ENCODE measurements at regions of chr5 and their contacts with region 1.

Region 1: DNA sequence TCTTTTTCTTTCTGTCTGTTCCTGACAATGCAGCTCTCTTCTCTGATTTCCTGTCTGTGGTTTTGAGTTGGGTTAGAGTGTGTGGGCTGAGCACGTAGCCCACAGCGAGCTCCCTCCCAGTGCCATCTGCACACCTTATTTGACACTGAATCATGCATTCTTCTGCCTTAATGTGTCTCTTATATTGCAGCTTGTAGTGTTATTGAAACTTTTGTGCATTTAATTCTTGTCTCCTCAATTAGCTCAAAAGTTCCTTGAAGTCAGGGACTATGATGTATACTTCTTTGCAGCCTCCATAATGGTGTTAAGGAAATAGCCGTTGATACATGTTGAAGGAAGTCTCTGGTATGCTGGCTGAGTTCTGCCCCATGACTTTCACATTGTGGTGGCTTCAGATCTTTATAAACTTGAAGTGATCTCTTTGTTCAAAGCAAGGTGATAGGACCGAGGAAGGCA is 576.2 kb upstream of the CLINT1 start:
- DNase-seq: no peak
- ATAC-seq: peak; percentile 49
- H3K4me3 Mint-ChIP-seq: peak overlapping the region; percentile 50
- H3K27ac Mint-ChIP-seq: peak overlapping the region; percentile 33
- H3K4me1 Mint-ChIP-seq: peaks cover 72% of the 10 kb centered on the region
- H3K27me3 Mint-ChIP-seq: no peaks in the 10 kb centered on the region
- CTCF ChIP-seq: no peak

Region 2: DNA sequence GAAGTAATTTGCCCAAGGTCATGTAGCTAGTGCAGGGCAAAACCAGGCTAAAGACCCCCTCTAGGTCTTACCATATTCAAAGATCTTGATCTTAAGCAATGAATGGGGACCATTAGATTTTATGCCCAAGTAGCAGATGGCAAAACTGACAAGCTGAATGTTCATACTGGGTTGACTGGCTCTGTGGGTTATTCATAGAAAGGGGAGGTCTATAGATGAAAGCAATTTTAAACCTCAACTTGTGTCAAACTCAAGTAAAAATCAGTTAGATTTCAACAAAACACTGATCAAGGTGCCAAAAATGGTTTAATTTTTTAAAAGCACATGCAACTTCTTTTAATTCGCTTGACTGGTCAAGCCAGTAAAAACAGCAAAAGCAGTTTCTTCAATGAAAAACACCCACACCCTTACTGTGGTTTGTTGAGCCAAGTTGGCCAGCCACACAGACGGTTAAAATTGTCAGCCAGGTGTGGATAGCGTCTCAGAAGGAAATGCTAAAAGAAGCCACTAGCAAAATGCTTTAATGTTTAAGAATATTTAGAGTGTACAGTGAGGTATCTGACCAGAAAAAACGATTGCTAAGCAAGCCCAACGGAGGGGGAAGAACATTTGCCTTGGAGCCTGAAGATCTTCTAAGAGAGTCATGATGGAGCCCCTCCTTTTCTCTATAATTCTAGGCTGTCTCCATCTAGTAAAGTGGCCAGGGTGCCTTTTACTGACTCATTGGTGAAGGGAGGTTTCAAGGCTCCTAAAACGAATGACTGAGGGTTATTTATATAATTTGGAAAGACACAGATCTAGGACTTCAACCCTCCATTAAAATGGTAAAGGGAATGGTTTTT is 36.6 kb before region 1 on chr5:
- CTCF ChIA-PET with region 1: no interaction called
- POLR2A ChIA-PET with region 1: no interaction called
- intact Hi-C with region 1: loop called (anchors 5 kb)
- DNase-seq: no peak
- ATAC-seq: peak; percentile 52
- H3K4me3 Mint-ChIP-seq: peak overlapping the region; percentile 37
- H3K27ac Mint-ChIP-seq: peak overlapping the region; percentile 38
- H3K4me1 Mint-ChIP-seq: peaks cover 59% of the 10 kb centered on the region
- H3K27me3 Mint-ChIP-seq: no peaks in the 10 kb centered on the region
- CTCF ChIP-seq: no peak

Region 3: DNA sequence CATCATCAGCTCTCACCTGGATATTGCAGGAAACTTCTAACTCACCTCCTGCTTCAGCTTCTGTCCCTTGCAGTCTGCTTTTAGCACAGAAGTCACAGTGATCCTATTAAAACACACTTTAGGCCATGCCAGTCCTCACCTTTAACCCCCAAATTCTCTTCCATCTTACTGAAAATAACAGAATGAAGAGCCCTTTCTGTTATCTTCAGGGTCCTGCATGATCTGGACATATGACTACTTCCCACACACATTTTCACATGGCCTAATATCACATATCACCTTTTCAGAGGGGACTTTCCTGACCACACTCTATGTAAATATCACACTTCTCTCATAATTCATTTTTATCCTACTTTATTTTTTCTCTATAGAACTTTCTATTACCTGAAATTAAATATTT is 25.7 kb before region 1 on chr5:
- CTCF ChIA-PET with region 1: no interaction called
- POLR2A ChIA-PET with region 1: no interaction called
- intact Hi-C with region 1: loop called (anchors 2 kb)
- DNase-seq: no peak
- ATAC-seq: peak; percentile 38
- H3K4me3 Mint-ChIP-seq: no peak overlapping the region
- H3K27ac Mint-ChIP-seq: no peak overlapping the region
- H3K4me1 Mint-ChIP-seq: peaks cover 28% of the 10 kb centered on the region
- H3K27me3 Mint-ChIP-seq: no peaks in the 10 kb centered on the region
- CTCF ChIP-seq: no peak

Measured in activated B cell treated with CpG ODN at 0.5 μM for 24 hours (primary cell).